ENCODE measurements at regions of chr4 and their contacts with region 1.

Region 1: GRCh38 chr4:38782452-38783108 is at the start of gene TLR10:
- DNase-seq: peak; percentile 88
- ATAC-seq: peak; percentile 90
- H3K4me3 ChIP-seq: peak within 1 kb of the TSS; percentile 50 to 92 (median 72)
- H3K4me3 Mint-ChIP-seq: peak within 1 kb of the TSS; percentile 95
- H3K27ac ChIP-seq: peak within 1 kb of the TSS; percentile 78 to 83
- H3K27ac Mint-ChIP-seq: peak within 1 kb of the TSS; percentile 96
- H3K4me1 ChIP-seq: peaks cover 34 to 51% of the 10 kb centered on the region in 2 donors
- H3K4me1 Mint-ChIP-seq: peaks cover 57% of the 10 kb centered on the region
- H3K27me3 ChIP-seq: no peaks in the 10 kb centered on the region
- H3K27me3 Mint-ChIP-seq: no peaks in the 10 kb centered on the region
- CTCF ChIP-seq: peak; percentile 83
- total RNA-seq, gene TLR10: 51.5 and 53.4 TPM in 2 replicates

Region 2: GRCh38 chr4:38675146-38676121 is 107.1 kb before region 1 on chr4:
- CTCF ChIA-PET with region 1: interaction called, 17 read pairs
- POLR2A ChIA-PET with region 1: no interaction called
- intact Hi-C with region 1: no loop called
- DNase-seq: peak; percentile 87
- ATAC-seq: peak; percentile 73
- H3K4me3 ChIP-seq: no peak overlapping the region
- H3K4me3 Mint-ChIP-seq: peak overlapping the region; percentile 33
- H3K27ac ChIP-seq: peak overlapping the region in 1 of 2 donors; percentile 73
- H3K27ac Mint-ChIP-seq: peak overlapping the region; percentile 59
- H3K4me1 ChIP-seq: peaks cover 55 to 59% of the 10 kb centered on the region in 2 donors
- H3K4me1 Mint-ChIP-seq: peaks cover 78% of the 10 kb centered on the region
- H3K27me3 ChIP-seq: no peaks in the 10 kb centered on the region
- H3K27me3 Mint-ChIP-seq: no peaks in the 10 kb centered on the region
- CTCF ChIP-seq: peak; percentile 93

Region 3: GRCh38 chr4:38795087-38795486 is 12.5 kb after region 1 on chr4:
- CTCF ChIA-PET with region 1: interaction called, 22 read pairs
- POLR2A ChIA-PET with region 1: interaction called, 3 read pairs
- intact Hi-C with region 1: no loop called
- DNase-seq: no peak
- ATAC-seq: no peak
- H3K4me3 ChIP-seq: no peak overlapping the region
- H3K4me3 Mint-ChIP-seq: no peak overlapping the region
- H3K27ac ChIP-seq: no peak overlapping the region
- H3K27ac Mint-ChIP-seq: peak overlapping the region; percentile 24
- H3K4me1 ChIP-seq: no peaks in the 10 kb centered on the region
- H3K4me1 Mint-ChIP-seq: peaks cover 12% of the 10 kb centered on the region
- H3K27me3 ChIP-seq: no peaks in the 10 kb centered on the region
- H3K27me3 Mint-ChIP-seq: no peaks in the 10 kb centered on the region
- CTCF ChIP-seq: no peak

Region 4: GRCh38 chr4:38815885-38816782 is 33.6 kb after region 1 on chr4:
- CTCF ChIA-PET with region 1: interaction called, 12 read pairs
- POLR2A ChIA-PET with region 1: no interaction called
- intact Hi-C with region 1: loop called (anchors 5 kb)
- DNase-seq: peak; percentile 88
- ATAC-seq: peak; percentile 87
- H3K4me3 ChIP-seq: peak overlapping the region in 3 of 5 experiments; percentile 5 to 53 (median 16)
- H3K4me3 Mint-ChIP-seq: peak overlapping the region; percentile 63
- H3K27ac ChIP-seq: peak overlapping the region; percentile 93 to 96
- H3K27ac Mint-ChIP-seq: peak overlapping the region; percentile 94
- H3K4me1 ChIP-seq: peaks cover 53 to 58% of the 10 kb centered on the region in 2 donors
- H3K4me1 Mint-ChIP-seq: peaks cover 60% of the 10 kb centered on the region
- H3K27me3 ChIP-seq: no peaks in the 10 kb centered on the region
- H3K27me3 Mint-ChIP-seq: no peaks in the 10 kb centered on the region
- CTCF ChIP-seq: no peak

Region 5: GRCh38 chr4:38958453-38959190 is 176.0 kb after region 1 on chr4:
- CTCF ChIA-PET with region 1: no interaction called
- POLR2A ChIA-PET with region 1: no interaction called
- intact Hi-C with region 1: no loop called
- DNase-seq: no peak
- ATAC-seq: no peak
- H3K4me3 ChIP-seq: no peak overlapping the region
- H3K4me3 Mint-ChIP-seq: no peak overlapping the region
- H3K27ac ChIP-seq: no peak overlapping the region
- H3K27ac Mint-ChIP-seq: no peak overlapping the region
- H3K4me1 ChIP-seq: peaks cover 0 to 5% of the 10 kb centered on the region in 2 donors
- H3K4me1 Mint-ChIP-seq: peaks cover 10% of the 10 kb centered on the region
- H3K27me3 ChIP-seq: no peaks in the 10 kb centered on the region
- H3K27me3 Mint-ChIP-seq: no peaks in the 10 kb centered on the region
- CTCF ChIP-seq: no peak

Region 6: GRCh38 chr4:39181905-39182638 is 399.5 kb after region 1 on chr4 and contains the start of gene WDR19:
- CTCF ChIA-PET with region 1: no interaction called
- POLR2A ChIA-PET with region 1: no interaction called
- intact Hi-C with region 1: loop called (anchors 1 kb)
- DNase-seq: peak; percentile 99
- ATAC-seq: peak; percentile 96
- H3K4me3 ChIP-seq: peak within 1 kb of the TSS; percentile 76 to 99 (median 94)
- H3K4me3 Mint-ChIP-seq: peak within 1 kb of the TSS; percentile 47
- H3K27ac ChIP-seq: peak within 1 kb of the TSS; percentile 12 to 79
- H3K27ac Mint-ChIP-seq: no peak within 1 kb of the TSS
- H3K4me1 ChIP-seq: peaks cover 12 to 16% of the 10 kb centered on the region in 2 donors
- H3K4me1 Mint-ChIP-seq: peaks cover 8% of the 10 kb centered on the region
- H3K27me3 ChIP-seq: no peaks in the 10 kb centered on the region
- H3K27me3 Mint-ChIP-seq: no peaks in the 10 kb centered on the region
- CTCF ChIP-seq: peak; percentile 73
- total RNA-seq, gene WDR19: 79.8 and 83.2 TPM in 2 replicates

Region 7: GRCh38 chr4:39295784-39296183 is 513.2 kb after region 1 on chr4:
- CTCF ChIA-PET with region 1: no interaction called
- POLR2A ChIA-PET with region 1: no interaction called
- intact Hi-C with region 1: no loop called
- DNase-seq: no peak
- ATAC-seq: no peak
- H3K4me3 ChIP-seq: no peak overlapping the region
- H3K4me3 Mint-ChIP-seq: no peak overlapping the region
- H3K27ac ChIP-seq: no peak overlapping the region
- H3K27ac Mint-ChIP-seq: no peak overlapping the region
- H3K4me1 ChIP-seq: no peaks in the 10 kb centered on the region
- H3K4me1 Mint-ChIP-seq: no peaks in the 10 kb centered on the region
- H3K27me3 ChIP-seq: no peaks in the 10 kb centered on the region
- H3K27me3 Mint-ChIP-seq: no peaks in the 10 kb centered on the region
- CTCF ChIP-seq: no peak